Heart right ventricle (tissue), 16 donors: ENCODE measurements at regions of chr1 and their contacts with region 1.

Region 1: GRCh38 chr1:64956733-64957441 is 9.5 kb downstream of the JAK1 start:
- DNase-seq: no peak
- ATAC-seq: peak in 3 of 8 donors; percentile 8 to 14 (median 10)
- H3K4me3 ChIP-seq: no peak overlapping the region
- H3K27ac ChIP-seq: peak overlapping the region in 4 of 10 donors; percentile 12 to 58 (median 37)
- H3K4me1 ChIP-seq: peaks cover 15 to 98% (median 69%) of the 10 kb centered on the region in 9 donors
- H3K27me3 ChIP-seq: no peaks in the 10 kb centered on the region
- CTCF ChIP-seq: no peak

Region 2: DNA sequence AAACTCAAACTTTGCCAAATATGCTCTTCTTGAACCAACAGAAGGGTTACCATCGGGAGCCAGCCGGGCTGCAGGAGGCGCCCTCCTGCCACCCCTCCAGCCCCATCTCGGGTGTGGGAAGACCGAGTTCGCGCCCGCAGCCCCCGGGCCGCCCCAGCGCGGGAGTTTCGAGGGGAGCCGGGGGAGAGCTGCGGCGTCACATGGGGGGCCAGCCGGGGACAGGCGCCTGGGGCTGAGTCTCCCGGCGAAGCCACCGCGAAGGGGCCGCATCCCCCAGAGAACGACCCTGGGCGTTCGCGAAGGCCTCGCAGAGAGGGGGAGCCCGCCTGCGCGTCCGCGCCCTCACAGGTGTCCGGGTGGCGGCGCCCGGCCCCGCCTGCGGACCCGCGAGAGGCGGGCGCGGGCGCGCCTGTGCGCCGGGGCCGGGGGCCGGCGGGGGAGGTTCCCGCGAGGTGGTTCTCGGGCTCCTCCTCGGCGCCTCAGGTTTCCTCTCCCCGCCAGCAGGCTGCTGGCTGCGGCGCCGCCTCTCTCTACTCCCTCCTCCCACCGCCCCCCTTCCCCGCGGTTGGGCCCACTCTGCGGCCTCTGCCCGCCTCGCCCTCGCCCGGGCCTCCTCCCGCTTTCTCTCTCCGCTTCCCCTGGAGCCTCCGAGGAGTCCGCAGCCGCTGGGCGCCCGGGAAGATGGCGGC is 212.3 kb before region 1 on chr1 and contains the start of gene RAVER2:
- intact Hi-C with region 1: loop called in 1 of 10 experiments (anchors 5 kb)
- DNase-seq: peak; percentile 79 to 80
- ATAC-seq: peak; percentile 81 to 92 (median 90)
- H3K4me3 ChIP-seq: peak within 1 kb of the TSS; percentile 74 to 94 (median 88)
- H3K27ac ChIP-seq: peak within 1 kb of the TSS; percentile 74 to 92 (median 84)
- H3K4me1 ChIP-seq: peaks cover 0 to 42% (median 28%) of the 10 kb centered on the region in 9 donors
- H3K27me3 ChIP-seq: no peaks in the 10 kb centered on the region
- CTCF ChIP-seq: peak in 8 of 9 donors; percentile 5 to 73 (median 60)
- total RNA-seq, gene RAVER2: 13.7 to 30.6 (median 21.5) TPM

Region 3: GRCh38 chr1:64882574-64883255 is 74.2 kb before region 1 on chr1:
- intact Hi-C with region 1: loop called in 2 of 10 experiments (anchors 1 to 10 kb)
- DNase-seq: no peak
- ATAC-seq: no peak
- H3K4me3 ChIP-seq: no peak overlapping the region
- H3K27ac ChIP-seq: no peak overlapping the region
- H3K4me1 ChIP-seq: peaks cover 3 to 33% (median 20%) of the 10 kb centered on the region in 9 donors
- H3K27me3 ChIP-seq: no peaks in the 10 kb centered on the region
- CTCF ChIP-seq: no peak

Region 4: DNA sequence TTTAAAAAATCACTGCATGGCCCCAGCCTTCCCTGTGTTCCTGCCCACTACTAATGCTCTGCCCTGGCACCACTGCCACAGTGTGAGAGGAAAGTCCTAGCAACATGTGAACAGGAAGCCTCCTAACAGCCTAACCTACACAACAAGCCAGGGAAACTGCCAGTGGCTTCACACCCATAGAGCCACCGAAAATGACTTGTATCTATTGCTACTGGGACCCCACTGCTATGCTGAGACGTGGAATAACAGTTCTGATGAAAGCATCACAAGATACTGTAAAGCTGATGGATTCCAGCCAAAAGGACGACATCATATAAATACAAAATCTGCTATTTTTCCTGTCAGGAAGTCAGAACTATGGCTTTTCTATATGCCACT is 65.5 kb before region 1 on chr1:
- intact Hi-C with region 1: loop called in 3 of 10 experiments (anchors 5 to 10 kb)
- DNase-seq: no peak
- ATAC-seq: peak in 7 of 8 donors; percentile 34 to 76 (median 61)
- H3K4me3 ChIP-seq: peak overlapping the region in 6 of 10 donors; percentile 1 to 35 (median 20)
- H3K27ac ChIP-seq: peak overlapping the region in 9 of 10 donors; percentile 15 to 69 (median 48)
- H3K4me1 ChIP-seq: peaks cover 18 to 97% (median 85%) of the 10 kb centered on the region in 9 donors
- H3K27me3 ChIP-seq: no peaks in the 10 kb centered on the region
- CTCF ChIP-seq: no peak

Region 5: GRCh38 chr1:64906447-64906846 is 50.4 kb before region 1 on chr1:
- intact Hi-C with region 1: loop called in 2 of 10 experiments (anchors 5 to 10 kb)
- DNase-seq: no peak
- ATAC-seq: no peak
- H3K4me3 ChIP-seq: no peak overlapping the region
- H3K27ac ChIP-seq: no peak overlapping the region
- H3K4me1 ChIP-seq: peaks cover 0 to 65% (median 21%) of the 10 kb centered on the region in 9 donors
- H3K27me3 ChIP-seq: no peaks in the 10 kb centered on the region
- CTCF ChIP-seq: no peak